WTC11 (cell line): ENCODE measurements at regions of chr9 and their contacts with region 1.

Region 1: DNA sequence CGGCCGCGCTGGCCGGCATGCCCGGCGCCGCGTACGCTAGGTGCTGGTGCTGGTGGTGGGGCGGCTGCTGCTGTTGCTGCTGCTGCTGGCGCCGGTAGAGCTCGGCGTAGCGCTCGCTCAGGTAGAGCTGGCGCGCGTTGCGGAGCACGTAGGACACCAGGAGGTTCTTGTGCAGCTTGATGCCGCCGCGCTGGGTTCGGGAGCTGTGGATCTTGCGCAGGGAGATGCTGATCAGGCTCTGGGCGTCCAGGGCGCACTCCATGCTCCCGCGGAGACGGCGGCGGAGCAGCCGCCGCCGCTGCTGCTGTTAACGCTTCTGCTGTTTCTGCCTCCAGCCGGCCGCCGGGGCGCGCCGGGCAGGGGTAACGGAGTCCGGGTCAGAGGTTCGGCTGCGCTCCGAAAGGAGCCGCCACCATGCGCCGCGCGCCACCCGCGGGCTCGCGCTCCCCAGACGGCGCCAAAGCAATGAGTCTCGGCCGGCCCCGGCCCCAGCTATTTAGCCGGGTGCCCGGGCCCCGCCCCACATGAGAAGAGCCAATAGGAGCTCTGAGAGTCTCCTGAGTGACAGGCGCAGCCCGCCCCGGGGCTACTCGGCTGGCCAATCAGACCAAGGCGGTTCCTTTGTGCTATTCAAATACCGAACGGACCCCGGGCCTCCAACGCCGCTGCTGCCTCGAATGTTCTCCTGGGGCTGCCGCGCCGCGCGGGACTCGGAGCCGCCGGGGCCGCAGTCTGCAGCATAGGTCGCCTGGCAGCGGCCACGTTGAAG is at the start of gene IER5L:
- DNase-seq: peak; percentile 96
- ATAC-seq: peak; percentile 69
- H3K4me3 Mint-ChIP-seq: peak within 1 kb of the TSS; percentile 84
- H3K27ac Mint-ChIP-seq: peak within 1 kb of the TSS; percentile 73; the same call in 1 of the 2 replicates
- H3K4me1 Mint-ChIP-seq: peaks cover 19% of the 10 kb centered on the region
- H3K27me3 Mint-ChIP-seq: peaks cover 82% of the 10 kb centered on the region
- CTCF ChIP-seq: no peak
- total RNA-seq, gene IER5L: 4.6 to 5.9 TPM (median 5.1 TPM) in 3 replicates

Region 2: DNA sequence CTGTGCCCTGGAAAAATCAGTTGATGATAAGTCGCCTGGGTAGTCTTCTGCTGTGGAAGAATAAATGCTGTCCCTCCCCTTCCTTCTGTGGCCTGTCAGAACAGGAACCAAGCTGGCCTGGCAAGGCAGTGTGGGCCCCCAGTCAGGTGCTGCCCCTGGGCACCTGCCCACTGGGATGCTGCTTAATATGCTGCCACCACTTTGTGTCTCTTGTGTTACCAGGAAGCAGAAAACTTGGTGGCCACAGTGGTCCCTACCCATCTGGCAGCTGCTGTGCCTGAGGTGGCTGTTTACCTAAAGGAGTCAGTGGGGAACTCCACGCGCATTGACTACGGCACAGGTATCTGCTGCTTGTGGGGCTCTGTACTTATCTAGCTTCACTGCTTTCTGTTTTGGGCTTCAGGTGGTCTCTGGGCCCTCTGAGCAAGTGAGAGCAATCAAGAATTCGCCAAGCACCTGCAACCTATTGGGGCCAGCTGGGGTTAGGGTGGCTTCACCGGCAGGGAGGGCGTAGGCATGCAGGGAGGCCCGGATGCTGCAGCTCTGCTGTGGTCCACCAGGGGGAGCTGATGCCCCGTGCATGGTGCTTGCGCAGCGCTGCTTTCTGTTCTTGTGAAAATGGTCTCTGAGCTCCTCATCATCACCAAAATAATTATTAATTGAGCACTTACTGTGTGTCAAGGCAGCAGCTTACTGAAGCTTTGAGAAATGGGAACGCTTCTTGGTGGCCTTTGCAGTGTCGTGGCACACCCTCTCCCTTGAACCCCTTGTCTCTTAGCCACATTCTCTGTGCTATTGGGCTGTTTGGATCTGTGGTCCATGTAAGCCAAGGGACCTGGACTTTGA is 46.5 kb before region 1 on chr9:
- CTCF ChIA-PET with region 1: interaction called, 345 read pairs
- POLR2A ChIA-PET with region 1: interaction called, 5 read pairs
- DNase-seq: peak; percentile 91
- ATAC-seq: peak; percentile 82
- H3K4me3 Mint-ChIP-seq: no peak overlapping the region
- H3K27ac Mint-ChIP-seq: no peak overlapping the region
- H3K4me1 Mint-ChIP-seq: peaks cover 21% of the 10 kb centered on the region
- H3K27me3 Mint-ChIP-seq: no peaks in the 10 kb centered on the region
- CTCF ChIP-seq: peak; percentile 98

Region 3: DNA sequence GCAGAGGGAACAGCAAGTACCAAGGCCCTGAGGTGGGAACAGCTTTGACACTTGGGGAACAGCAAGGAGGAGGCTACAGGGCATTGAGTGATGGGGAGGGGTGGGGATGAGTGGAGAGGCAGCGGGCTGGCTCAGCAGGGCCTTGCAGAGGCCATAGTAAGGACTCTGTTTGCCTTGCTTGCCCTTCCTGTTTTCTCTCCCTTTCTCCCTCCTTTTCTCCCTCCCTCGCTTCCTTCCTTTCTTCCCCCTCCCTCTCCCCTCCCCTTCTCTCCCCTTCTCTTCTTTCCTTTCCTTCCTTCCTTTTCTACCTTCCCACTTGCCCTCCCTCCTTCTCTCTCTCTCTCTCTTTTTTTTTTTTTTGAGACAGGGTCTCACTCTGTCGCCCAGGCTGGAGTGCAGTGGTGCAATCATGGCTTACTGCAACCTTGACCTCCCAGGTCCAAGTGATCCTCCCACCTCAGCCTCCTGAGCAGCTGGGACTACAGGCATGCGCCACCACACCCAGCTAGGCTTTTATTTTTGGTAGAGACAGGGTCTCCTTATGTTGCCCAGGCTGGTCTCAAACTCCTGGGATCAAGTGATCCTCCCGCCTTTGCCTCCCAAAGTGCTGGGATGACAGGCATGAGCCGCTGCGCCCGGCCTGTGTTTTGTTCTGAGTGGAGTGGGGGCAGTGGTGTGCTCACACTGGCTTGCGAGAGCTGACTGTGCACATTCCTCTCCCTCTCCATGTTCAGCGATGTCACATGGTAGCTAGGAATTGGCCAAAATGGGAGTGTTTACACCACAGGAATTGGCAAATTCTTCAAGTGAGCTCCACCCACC is 17.1 kb before region 1 on chr9:
- CTCF ChIA-PET with region 1: interaction called, 26 read pairs
- POLR2A ChIA-PET with region 1: interaction called, 16 read pairs
- DNase-seq: no peak
- ATAC-seq: no peak
- H3K4me3 Mint-ChIP-seq: no peak overlapping the region
- H3K27ac Mint-ChIP-seq: peak overlapping the region; percentile 36; the same call in 1 of the 2 replicates
- H3K4me1 Mint-ChIP-seq: peaks cover 8% of the 10 kb centered on the region; the same call in 1 of the 2 replicates
- H3K27me3 Mint-ChIP-seq: no peaks in the 10 kb centered on the region
- CTCF ChIP-seq: no peak

Region 4: DNA sequence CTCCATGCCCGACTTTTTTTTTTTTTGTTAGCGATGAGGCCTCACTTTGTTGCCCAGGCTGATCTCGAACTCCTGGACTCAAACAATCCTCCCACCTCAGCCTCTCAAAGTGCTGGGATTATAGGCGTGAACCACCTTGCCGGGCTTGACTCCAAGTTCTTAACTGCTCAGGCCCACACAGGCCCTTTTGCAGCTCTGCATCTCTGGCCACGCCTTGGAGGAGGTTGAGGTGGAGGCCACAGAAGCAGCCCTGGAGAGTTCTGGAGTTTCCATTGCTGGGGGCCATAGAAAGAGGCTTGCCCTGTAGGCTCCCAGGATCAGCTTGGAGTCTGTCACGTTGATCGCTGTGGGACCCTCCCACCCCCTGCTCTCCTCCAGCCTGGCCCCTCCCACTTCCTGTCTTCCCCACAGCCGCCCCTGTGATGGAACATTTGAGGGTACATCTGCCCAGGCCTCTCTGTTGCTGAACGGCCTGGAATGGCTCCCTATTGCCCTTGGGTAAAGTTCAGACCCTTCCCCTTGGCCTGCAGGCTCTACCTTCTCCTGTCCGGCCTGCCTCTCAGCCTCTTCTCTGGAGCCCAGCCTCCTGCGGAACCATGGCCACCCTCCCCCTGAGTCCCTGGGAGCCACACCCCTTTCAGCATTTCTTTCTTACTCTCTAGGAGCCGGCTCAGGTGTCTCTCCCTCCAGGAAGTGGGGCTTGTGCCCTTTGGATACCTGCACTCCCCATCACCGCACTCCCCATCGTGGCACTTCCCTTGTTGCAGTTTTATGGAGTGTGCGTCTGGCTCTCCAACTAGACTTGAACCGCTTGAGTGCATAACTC is 30.4 kb after region 1 on chr9:
- CTCF ChIA-PET with region 1: interaction called, 15 read pairs
- POLR2A ChIA-PET with region 1: interaction called, 4 read pairs
- DNase-seq: peak; percentile 84
- ATAC-seq: peak; percentile 87
- H3K4me3 Mint-ChIP-seq: peak overlapping the region; percentile 97
- H3K27ac Mint-ChIP-seq: peak overlapping the region; percentile 98
- H3K4me1 Mint-ChIP-seq: peaks cover 38% of the 10 kb centered on the region
- H3K27me3 Mint-ChIP-seq: peaks cover 3% of the 10 kb centered on the region; the same call in 1 of the 2 replicates
- CTCF ChIP-seq: no peak

Region 5: GRCh38 chr9:129333953-129334724 is 156.2 kb after region 1 on chr9:
- CTCF ChIA-PET with region 1: interaction called, 27 read pairs
- POLR2A ChIA-PET with region 1: interaction called, 13 read pairs
- DNase-seq: peak; percentile 91
- ATAC-seq: peak; percentile 82
- H3K4me3 Mint-ChIP-seq: peak overlapping the region; percentile 57
- H3K27ac Mint-ChIP-seq: peak overlapping the region; percentile 100
- H3K4me1 Mint-ChIP-seq: peaks cover 43% of the 10 kb centered on the region
- H3K27me3 Mint-ChIP-seq: 0 out of 2 replicates have a peak, but pooled peaks cover 4% of the 10 kb centered on the region
- CTCF ChIP-seq: no peak

Region 6: GRCh38 chr9:129597355-129598088 is 419.5 kb after region 1 on chr9:
- CTCF ChIA-PET with region 1: interaction called, 3 read pairs
- POLR2A ChIA-PET with region 1: interaction called, 12 read pairs
- DNase-seq: peak; percentile 74
- ATAC-seq: peak; percentile 29
- H3K4me3 Mint-ChIP-seq: peak overlapping the region; percentile 56
- H3K27ac Mint-ChIP-seq: no peak overlapping the region
- H3K4me1 Mint-ChIP-seq: peaks cover 44% of the 10 kb centered on the region
- H3K27me3 Mint-ChIP-seq: peaks cover 52% of the 10 kb centered on the region
- CTCF ChIP-seq: no peak

Region 7: DNA sequence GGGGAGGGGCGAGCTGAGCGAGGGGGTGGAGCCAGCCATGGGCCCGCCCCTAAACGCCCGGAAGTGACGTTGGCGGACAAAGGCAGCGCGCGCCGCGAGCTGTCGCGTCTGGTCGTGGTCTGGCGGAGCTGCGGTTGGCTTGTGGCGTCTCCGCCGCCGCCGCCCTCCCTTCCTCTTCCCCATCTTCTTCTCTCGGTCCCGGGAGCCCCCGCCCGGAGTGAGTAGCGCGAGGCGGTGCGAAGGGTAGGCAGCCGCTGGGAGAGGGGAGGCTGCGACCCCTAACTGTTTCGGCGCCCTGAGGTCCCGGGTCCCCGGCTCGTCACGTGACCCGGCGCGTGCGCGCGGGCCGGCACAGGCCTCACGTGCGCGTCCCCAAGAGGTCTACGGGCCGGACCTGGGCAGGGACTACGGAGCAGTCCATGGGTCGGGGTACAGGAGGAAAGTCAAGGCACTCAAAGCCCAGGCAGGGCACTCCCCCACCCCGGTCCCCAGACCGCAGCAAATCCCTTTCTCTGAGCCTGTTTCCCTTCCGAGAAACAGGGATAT is 448.2 kb after region 1 on chr9 and contains the start of gene NTMT1:
- CTCF ChIA-PET with region 1: interaction called, 53 read pairs
- POLR2A ChIA-PET with region 1: no interaction called
- DNase-seq: peak; percentile 84
- ATAC-seq: peak; percentile 49
- H3K4me3 Mint-ChIP-seq: peak within 1 kb of the TSS; percentile 85
- H3K27ac Mint-ChIP-seq: peak within 1 kb of the TSS; percentile 65
- H3K4me1 Mint-ChIP-seq: peaks cover 50% of the 10 kb centered on the region
- H3K27me3 Mint-ChIP-seq: peaks cover 18% of the 10 kb centered on the region
- CTCF ChIP-seq: no peak
- total RNA-seq, gene NTMT1: 55.4 to 71.1 TPM (median 58.1 TPM) in 3 replicates